ENCODE measurements at regions of chr11 and their contacts with region 1.

Region 1: DNA sequence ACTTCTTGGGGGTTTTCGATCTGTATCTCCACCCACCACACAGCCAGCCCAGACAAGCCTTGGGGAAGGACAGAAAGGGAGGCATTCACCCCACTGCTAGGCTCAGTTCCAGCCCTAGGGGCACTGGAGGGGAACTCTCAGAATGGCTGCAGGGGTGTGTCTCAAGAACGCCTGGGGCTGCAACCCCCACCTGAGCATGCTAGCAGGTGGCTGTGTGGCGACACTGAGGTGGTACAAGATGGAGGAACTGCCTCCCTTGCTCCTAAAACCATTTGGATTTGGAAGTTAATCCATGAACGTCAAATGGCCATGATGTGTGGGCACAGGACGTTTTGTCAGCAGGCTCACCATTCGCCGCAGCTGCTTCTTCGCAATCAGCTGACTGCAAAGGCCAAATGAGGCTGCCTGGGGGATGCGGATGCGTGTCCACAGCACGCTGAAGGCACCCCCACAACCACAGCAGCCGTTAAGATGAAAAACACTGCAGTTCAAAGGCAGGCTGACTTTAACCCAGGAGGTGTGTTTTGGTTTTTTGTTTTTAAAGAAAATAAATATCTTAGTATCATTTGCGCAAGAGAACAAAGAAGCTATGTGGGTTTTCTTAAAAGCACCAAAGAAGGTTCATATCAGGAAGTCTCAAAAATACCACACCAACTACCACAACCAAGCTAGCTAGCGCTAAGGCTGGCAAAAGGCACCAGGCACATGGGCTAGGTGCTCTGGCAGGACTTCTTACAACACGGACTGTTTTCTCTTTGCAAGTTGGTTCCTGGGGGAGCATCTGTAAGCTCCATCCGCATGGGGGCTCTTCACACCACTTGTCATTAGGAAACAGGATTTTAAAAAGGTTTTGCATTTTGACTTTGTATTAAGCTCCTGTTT is 22.2 kb upstream of the NAP1L4 start:
- DNase-seq: peak; percentile 64 to 92 (median 78)
- ATAC-seq: peak; percentile 86
- H3K4me3 ChIP-seq: peak overlapping the region; percentile 25
- H3K4me3 Mint-ChIP-seq: peak overlapping the region; percentile 66
- H3K27ac ChIP-seq: peak overlapping the region; percentile 21 to 48
- H3K27ac Mint-ChIP-seq: peak overlapping the region; percentile 93
- H3K4me1 ChIP-seq: peaks cover 87% of the 10 kb centered on the region
- H3K4me1 Mint-ChIP-seq: peaks cover 33% of the 10 kb centered on the region
- H3K27me3 ChIP-seq: no peaks in the 10 kb centered on the region
- H3K27me3 Mint-ChIP-seq: no peaks in the 10 kb centered on the region
- CTCF ChIP-seq: no peak

Region 2: DNA sequence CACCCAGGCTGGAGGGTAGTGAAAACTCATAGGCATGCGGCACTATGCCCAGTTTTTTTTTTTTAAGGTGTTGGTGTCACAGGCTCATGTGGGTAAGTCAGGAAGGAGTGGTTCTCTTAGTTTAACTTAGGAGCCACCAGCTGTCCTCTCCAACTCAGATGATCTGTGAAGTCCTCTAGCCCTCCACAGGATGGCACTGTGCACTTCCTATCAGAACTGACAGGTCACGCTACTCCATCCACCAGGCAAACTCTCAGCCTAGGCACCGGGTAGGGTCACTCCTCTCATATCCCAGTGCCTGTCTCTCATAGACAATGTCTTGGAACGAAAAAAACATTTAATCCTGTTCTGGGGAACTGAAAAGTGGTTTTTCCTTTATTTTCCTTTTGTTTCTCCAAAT is 38.7 kb before region 1 on chr11:
- CTCF ChIA-PET with region 1: interaction called, 8 read pairs
- POLR2A ChIA-PET with region 1: interaction called, 15 read pairs
- intact Hi-C with region 1: no loop called
- DNase-seq: peak; percentile 25 to 78 (median 48)
- ATAC-seq: peak; percentile 97
- H3K4me3 ChIP-seq: no peak overlapping the region
- H3K4me3 Mint-ChIP-seq: no peak overlapping the region
- H3K27ac ChIP-seq: no peak overlapping the region
- H3K27ac Mint-ChIP-seq: no peak overlapping the region
- H3K4me1 ChIP-seq: peaks cover 13% of the 10 kb centered on the region
- H3K4me1 Mint-ChIP-seq: peaks cover 38% of the 10 kb centered on the region
- H3K27me3 ChIP-seq: no peaks in the 10 kb centered on the region
- H3K27me3 Mint-ChIP-seq: no peaks in the 10 kb centered on the region
- CTCF ChIP-seq: peak; percentile 56

Region 3: DNA sequence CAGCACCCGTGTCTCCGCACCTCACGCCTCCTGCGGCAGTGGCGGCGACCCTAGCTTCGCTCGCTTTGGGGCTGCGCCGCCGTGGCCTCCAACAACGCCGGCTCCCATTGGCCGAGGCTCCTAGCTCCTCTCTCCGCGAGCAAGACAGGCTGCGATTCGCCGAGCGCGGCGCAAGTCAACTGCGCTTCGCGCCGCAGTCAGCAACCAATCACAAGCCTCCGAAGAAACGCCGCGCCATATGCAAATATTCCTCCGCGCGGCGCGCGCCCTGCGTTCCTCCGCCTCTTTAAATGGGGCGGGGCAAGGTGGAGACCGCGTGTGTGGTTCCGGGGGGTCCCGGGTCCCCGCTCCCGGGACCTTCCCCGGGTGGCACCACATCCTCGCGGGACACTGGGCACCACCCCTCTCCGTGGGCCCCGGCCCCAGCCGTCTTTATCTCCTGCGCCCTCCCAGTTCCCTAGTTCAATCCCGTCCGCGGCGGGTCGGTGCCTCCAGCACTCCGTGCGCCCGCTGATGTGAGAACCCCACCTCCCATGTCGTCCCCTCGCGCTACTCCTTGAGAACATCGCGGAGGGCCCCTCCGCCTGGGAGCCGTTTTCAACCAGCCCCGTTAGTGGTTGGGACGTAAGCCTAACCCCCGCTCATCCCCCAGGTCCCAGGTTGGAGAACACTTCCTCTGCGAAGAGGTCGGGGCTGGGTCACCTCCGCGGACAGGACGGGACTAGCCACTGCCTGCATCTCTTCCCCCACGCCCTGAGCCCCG is 21.9 kb before region 1 on chr11 and contains the start of gene NAP1L4:
- CTCF ChIA-PET with region 1: interaction called, 4 read pairs
- POLR2A ChIA-PET with region 1: interaction called, 206 read pairs
- intact Hi-C with region 1: loop called (anchors 1 to 2 kb)
- DNase-seq: peak; percentile 91 to 99 (median 96)
- ATAC-seq: peak; percentile 83
- H3K4me3 ChIP-seq: peak within 1 kb of the TSS; percentile 95
- H3K4me3 Mint-ChIP-seq: peak within 1 kb of the TSS; percentile 99
- H3K27ac ChIP-seq: peak within 1 kb of the TSS; percentile 73 to 78
- H3K27ac Mint-ChIP-seq: peak within 1 kb of the TSS; percentile 89
- H3K4me1 ChIP-seq: peaks cover 17% of the 10 kb centered on the region
- H3K4me1 Mint-ChIP-seq: peaks cover 35% of the 10 kb centered on the region
- H3K27me3 ChIP-seq: no peaks in the 10 kb centered on the region
- H3K27me3 Mint-ChIP-seq: no peaks in the 10 kb centered on the region
- CTCF ChIP-seq: no peak
- total RNA-seq, gene NAP1L4: 262 to 285 TPM

Region 4: GRCh38 chr11:3037040-3037944 is 23.0 kb after region 1 on chr11:
- CTCF ChIA-PET with region 1: interaction called, 10 read pairs
- POLR2A ChIA-PET with region 1: interaction called, 12 read pairs
- intact Hi-C with region 1: loop called in 1 of 2 experiments (anchors 2 kb)
- DNase-seq: peak in 12 of 14 experiments; percentile 22 to 72 (median 38)
- ATAC-seq: peak; percentile 89
- H3K4me3 ChIP-seq: no peak overlapping the region
- H3K4me3 Mint-ChIP-seq: no peak overlapping the region
- H3K27ac ChIP-seq: no peak overlapping the region
- H3K27ac Mint-ChIP-seq: peak overlapping the region; percentile 63
- H3K4me1 ChIP-seq: peaks cover 19% of the 10 kb centered on the region
- H3K4me1 Mint-ChIP-seq: peaks cover 30% of the 10 kb centered on the region
- H3K27me3 ChIP-seq: no peaks in the 10 kb centered on the region
- H3K27me3 Mint-ChIP-seq: no peaks in the 10 kb centered on the region
- CTCF ChIP-seq: peak; percentile 67

Region 5: GRCh38 chr11:3091791-3092602 is 77.7 kb after region 1 on chr11:
- CTCF ChIA-PET with region 1: interaction called, 10 read pairs
- POLR2A ChIA-PET with region 1: interaction called, 11 read pairs
- intact Hi-C with region 1: no loop called
- DNase-seq: peak; percentile 49 to 87 (median 66)
- ATAC-seq: peak; percentile 93
- H3K4me3 ChIP-seq: no peak overlapping the region
- H3K4me3 Mint-ChIP-seq: no peak overlapping the region
- H3K27ac ChIP-seq: no peak overlapping the region
- H3K27ac Mint-ChIP-seq: no peak overlapping the region
- H3K4me1 ChIP-seq: peaks cover 6% of the 10 kb centered on the region
- H3K4me1 Mint-ChIP-seq: no peaks in the 10 kb centered on the region
- H3K27me3 ChIP-seq: peaks cover 0 to 3% of the 10 kb centered on the region in 2 experiments
- H3K27me3 Mint-ChIP-seq: no peaks in the 10 kb centered on the region
- CTCF ChIP-seq: peak; percentile 96